Colonic mucosa (tissue), 4 donors: ENCODE measurements at regions of chr11 and their contacts with region 1.

Region 1: GRCh38 chr11:111446404-111447111 is 65.6 kb downstream of the BTG4 start:
- DNase-seq: peak; percentile 90
- H3K4me3 ChIP-seq: no peak overlapping the region
- H3K27ac ChIP-seq: no peak overlapping the region
- H3K4me1 ChIP-seq: no peaks in the 10 kb centered on the region
- H3K27me3 ChIP-seq: no peaks in the 10 kb centered on the region
- CTCF ChIP-seq: peak; percentile 73

Region 2: DNA sequence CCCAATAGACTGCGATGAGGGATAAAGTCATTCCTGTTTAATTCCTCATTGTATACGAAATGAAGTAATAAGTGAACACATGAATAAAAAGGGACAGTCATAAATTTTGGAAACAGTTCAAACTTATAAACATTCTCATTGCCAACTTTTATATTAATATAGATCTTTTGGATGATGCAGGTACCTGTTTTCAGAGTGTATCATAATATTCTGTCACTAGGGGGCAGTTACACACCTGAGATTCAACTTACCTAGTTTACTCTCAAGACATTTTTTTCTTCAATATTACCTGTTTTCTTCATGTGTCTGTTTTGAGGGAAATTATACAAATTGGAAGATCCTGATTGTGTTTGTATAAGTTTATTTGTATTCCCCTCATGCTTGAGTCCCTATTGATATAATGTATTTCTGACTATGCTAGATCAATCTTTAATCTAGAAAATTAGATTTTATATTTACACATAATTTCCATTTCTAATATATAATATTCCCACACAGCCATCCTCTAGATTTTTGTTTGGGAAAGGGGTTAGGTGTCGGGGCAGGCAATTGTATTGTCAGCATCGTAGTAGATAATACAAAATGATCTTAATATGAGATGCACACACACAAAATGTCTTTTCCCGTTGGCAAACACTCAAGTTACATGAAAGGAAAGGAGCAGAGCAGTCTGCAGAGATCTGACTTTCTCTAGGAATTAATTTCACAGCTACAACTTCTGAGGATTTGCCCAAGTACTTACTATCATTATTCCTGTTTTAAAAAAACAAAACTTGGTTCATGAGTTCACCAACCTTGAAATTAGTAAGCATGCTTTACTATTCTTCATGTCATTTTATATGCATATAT is 998.4 kb before region 1 on chr11:
- intact Hi-C with region 1: loop called (anchors 10 kb)
- DNase-seq: no peak
- H3K4me3 ChIP-seq: no peak overlapping the region
- H3K27ac ChIP-seq: no peak overlapping the region
- H3K4me1 ChIP-seq: no peaks in the 10 kb centered on the region
- H3K27me3 ChIP-seq: no peaks in the 10 kb centered on the region
- CTCF ChIP-seq: peak; percentile 41

Region 3: DNA sequence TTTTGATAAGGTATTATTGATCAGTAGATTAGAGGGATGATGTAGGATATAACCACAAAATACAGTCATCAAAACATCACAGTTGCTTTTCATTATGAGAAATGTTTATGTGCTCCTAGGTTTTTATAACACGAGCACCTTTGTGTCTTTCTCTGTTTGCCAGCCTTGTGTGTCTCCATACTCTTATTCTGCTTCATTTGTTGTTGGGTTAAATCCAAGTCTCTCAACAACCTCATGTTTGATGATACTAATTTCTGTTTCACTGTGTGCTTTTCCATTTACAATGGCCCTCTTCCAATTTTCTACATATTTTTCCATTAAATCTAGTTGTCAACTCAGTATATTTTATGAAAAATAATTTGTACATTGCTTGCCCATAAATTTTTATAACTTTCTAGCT is 308.7 kb before region 1 on chr11:
- intact Hi-C with region 1: no loop called
- DNase-seq: no peak
- H3K4me3 ChIP-seq: no peak overlapping the region
- H3K27ac ChIP-seq: no peak overlapping the region
- H3K4me1 ChIP-seq: no peaks in the 10 kb centered on the region
- H3K27me3 ChIP-seq: no peaks in the 10 kb centered on the region
- CTCF ChIP-seq: no peak

Region 4: DNA sequence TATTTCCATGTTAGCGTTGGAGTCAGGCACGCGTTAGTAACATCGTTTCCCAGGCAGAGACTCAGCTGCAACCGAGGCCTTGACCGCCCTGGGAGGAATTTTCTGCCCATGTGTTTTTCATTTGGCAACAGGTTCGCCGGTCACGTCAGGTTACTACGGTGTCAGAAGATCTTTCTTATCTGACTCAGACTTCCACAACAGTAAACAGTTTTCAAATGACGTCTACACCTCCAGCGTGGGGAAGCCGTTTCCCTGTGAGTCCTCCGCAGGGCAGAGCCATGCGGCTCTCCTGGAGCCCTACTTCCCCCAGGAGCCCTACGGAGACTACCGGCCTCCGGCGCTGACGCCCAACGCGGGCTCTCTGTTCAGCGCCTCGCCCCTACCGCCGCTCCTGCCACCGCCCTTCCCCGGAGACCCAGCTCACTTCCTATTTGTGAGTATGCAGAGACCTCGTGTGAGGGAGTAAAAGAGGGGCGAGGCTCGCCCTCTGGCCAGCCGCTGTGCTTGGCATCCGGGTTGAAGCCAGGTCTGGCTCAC is 162.5 kb before region 1 on chr11:
- intact Hi-C with region 1: loop called (anchors 5 kb)
- DNase-seq: peak; percentile 74
- H3K4me3 ChIP-seq: peak overlapping the region; percentile 6
- H3K27ac ChIP-seq: peak overlapping the region; percentile 29
- H3K4me1 ChIP-seq: peaks cover 6% of the 10 kb centered on the region
- H3K27me3 ChIP-seq: no peaks in the 10 kb centered on the region
- CTCF ChIP-seq: no peak